ENCODE measurements at regions of chr13 and their contacts with region 1.

Region 1: DNA sequence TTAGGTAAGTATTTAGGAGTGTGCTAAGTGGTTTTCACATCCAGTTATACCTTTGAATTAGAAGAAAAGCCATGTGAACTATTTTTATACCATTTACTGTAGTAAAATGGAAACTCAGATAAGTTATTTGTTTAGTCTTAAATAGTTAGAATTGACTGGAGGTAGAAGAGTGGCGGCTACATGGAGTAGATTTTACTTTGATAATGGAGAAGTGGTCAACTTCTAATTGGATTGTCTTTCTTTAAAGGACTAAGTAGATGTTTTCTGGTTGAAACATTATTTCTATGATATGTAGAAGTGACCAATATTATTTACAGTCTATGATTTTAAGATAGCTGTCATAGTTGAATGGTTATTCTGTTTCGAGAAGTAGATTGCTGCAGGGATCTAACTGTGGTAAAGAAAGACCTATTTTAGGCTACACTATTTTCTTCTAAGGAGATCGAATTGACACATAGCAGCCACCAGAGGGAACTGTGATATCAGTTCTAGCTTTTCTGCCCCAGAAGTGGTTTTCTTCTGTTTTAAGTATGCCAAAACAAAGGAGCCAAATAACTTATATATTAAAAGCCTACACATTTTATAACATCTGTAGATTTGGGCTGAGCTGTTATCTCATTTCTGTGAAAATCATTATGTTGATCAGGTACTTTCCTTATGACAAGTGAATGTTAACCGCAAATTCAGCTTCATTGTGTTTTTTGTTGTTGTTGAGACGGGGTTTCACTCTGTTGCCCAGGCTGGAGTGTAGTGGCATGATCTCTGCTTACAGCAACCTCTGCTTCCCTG is 26.1 kb downstream of the ZMYM2 start:
- DNase-seq: peak; percentile 72
- ATAC-seq: peak; percentile 97
- H3K4me3 ChIP-seq: no peak overlapping the region
- H3K27ac ChIP-seq: no peak overlapping the region; the same call in 1 of the 2 replicates
- H3K4me1 ChIP-seq: peaks cover 4% of the 10 kb centered on the region
- H3K27me3 ChIP-seq: no peaks in the 10 kb centered on the region
- CTCF ChIP-seq: peak; percentile 79
- POLR2A ChIP-seq: no peak
- RAD21 ChIP-seq: peak; percentile 60

Region 2: GRCh38 chr13:19665427-19665859 is 319.2 kb before region 1 on chr13:
- CTCF ChIA-PET with region 1: no interaction called
- POLR2A ChIA-PET with region 1: no interaction called
- dilution Hi-C with region 1: no loop called
- in situ Hi-C with region 1: loop called (anchors 25 kb)
- intact Hi-C with region 1: no loop called
- DNase-seq: no peak
- ATAC-seq: no peak
- H3K4me3 ChIP-seq: no peak overlapping the region
- H3K27ac ChIP-seq: no peak overlapping the region
- H3K4me1 ChIP-seq: peaks cover 4% of the 10 kb centered on the region; the same call in 1 of the 2 replicates
- H3K27me3 ChIP-seq: no peaks in the 10 kb centered on the region
- CTCF ChIP-seq: no peak
- POLR2A ChIP-seq: no peak
- RAD21 ChIP-seq: no peak